Psoas muscle (tissue), 8 donors: ENCODE measurements at regions of chr13 and their contacts with region 1.

Region 1: GRCh38 chr13:75704579-75705320 is 68.6 kb downstream of the LMO7 start:
- DNase-seq: no peak
- ATAC-seq: peak; percentile 30 to 63 (median 55)
- H3K4me3 ChIP-seq: peak overlapping the region; percentile 29
- H3K27ac ChIP-seq: peak overlapping the region; percentile 84
- H3K4me1 ChIP-seq: peaks cover 8% of the 10 kb centered on the region
- H3K27me3 ChIP-seq: no peaks in the 10 kb centered on the region
- CTCF ChIP-seq: no peak

Region 2: GRCh38 chr13:75415692-75416091 is 289.1 kb before region 1 on chr13:
- intact Hi-C with region 1: no loop called
- DNase-seq: no peak
- ATAC-seq: peak in 2 of 4 donors; percentile 37 to 59
- H3K4me3 ChIP-seq: no peak overlapping the region
- H3K27ac ChIP-seq: peak overlapping the region; percentile 87
- H3K4me1 ChIP-seq: peaks cover 59% of the 10 kb centered on the region
- H3K27me3 ChIP-seq: no peaks in the 10 kb centered on the region
- CTCF ChIP-seq: no peak

Region 3: DNA sequence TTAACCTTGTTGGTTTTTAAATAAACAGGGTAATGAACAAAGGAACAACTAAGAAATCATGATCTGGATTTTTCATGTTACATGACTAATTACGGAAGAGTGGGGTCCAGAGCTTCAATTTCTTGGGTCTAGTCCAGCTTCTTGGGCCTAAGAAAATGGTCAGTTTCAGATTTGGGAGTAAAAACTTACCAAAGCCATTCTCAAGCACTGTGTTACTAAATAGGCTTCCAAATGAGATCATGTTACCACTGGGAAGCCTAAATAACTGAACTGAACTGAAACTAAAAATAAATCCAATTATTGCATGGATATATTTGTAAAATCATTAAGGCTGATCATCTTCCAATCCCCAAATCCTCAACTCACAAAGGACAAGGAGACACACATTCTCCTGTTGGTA is 236.7 kb before region 1 on chr13:
- intact Hi-C with region 1: no loop called
- DNase-seq: no peak
- ATAC-seq: peak in 1 of 4 donors; percentile 31
- H3K4me3 ChIP-seq: peak overlapping the region; percentile 39
- H3K27ac ChIP-seq: peak overlapping the region; percentile 92
- H3K4me1 ChIP-seq: peaks cover 73% of the 10 kb centered on the region
- H3K27me3 ChIP-seq: no peaks in the 10 kb centered on the region
- CTCF ChIP-seq: no peak

Region 4: GRCh38 chr13:75760131-75761021 is 55.6 kb after region 1 on chr13:
- intact Hi-C with region 1: no loop called
- DNase-seq: peak in 1 of 2 donors; percentile 48
- ATAC-seq: peak; percentile 88 to 93 (median 89)
- H3K4me3 ChIP-seq: peak overlapping the region; percentile 69
- H3K27ac ChIP-seq: peak overlapping the region; percentile 89
- H3K4me1 ChIP-seq: peaks cover 8% of the 10 kb centered on the region
- H3K27me3 ChIP-seq: no peaks in the 10 kb centered on the region
- CTCF ChIP-seq: peak; percentile 28

Region 5: GRCh38 chr13:75792526-75793187 is 87.9 kb after region 1 on chr13:
- intact Hi-C with region 1: loop called in 1 of 2 experiments (anchors 5 kb)
- DNase-seq: no peak
- ATAC-seq: no peak
- H3K4me3 ChIP-seq: peak overlapping the region; percentile 29
- H3K27ac ChIP-seq: peak overlapping the region; percentile 59
- H3K4me1 ChIP-seq: peaks cover 62% of the 10 kb centered on the region
- H3K27me3 ChIP-seq: no peaks in the 10 kb centered on the region
- CTCF ChIP-seq: no peak